ENCODE measurements at regions of chr15 and their contacts with region 1.

Region 1: GRCh38 chr15:70810916-70811578 is 42.9 kb downstream of the LARP6 start:
- DNase-seq: no peak
- H3K4me3 Mint-ChIP-seq: no peak overlapping the region
- H3K27ac Mint-ChIP-seq: no peak overlapping the region
- H3K4me1 Mint-ChIP-seq: no peaks in the 10 kb centered on the region
- H3K27me3 Mint-ChIP-seq: peaks cover 2% of the 10 kb centered on the region

Region 2: DNA sequence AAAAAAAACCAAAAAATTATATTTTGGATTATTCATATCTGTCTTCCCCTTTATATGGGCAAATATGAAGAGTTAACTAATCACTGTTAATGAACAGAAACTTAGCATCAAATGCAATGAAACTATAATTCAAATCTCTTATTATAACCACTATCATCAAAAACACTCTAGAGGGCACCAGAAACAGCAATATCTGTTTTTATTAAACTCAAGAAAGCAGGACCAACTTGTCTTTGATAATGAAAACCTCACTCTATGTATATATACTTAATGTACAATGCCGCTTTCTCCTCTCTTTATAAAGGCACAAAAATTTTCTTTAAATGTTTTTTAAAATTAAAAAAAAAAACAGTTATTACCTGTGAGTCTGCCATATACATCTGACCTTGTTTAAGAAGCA is 140.4 kb before region 1 on chr15:
- CTCF ChIA-PET with region 1: interaction called, 12 read pairs
- POLR2A ChIA-PET with region 1: no interaction called
- intact Hi-C with region 1: loop called (anchors 5 kb)
- DNase-seq: no peak
- H3K4me3 Mint-ChIP-seq: no peak overlapping the region
- H3K27ac Mint-ChIP-seq: no peak overlapping the region
- H3K4me1 Mint-ChIP-seq: peaks cover 16% of the 10 kb centered on the region
- H3K27me3 Mint-ChIP-seq: peaks cover 2% of the 10 kb centered on the region

Region 3: DNA sequence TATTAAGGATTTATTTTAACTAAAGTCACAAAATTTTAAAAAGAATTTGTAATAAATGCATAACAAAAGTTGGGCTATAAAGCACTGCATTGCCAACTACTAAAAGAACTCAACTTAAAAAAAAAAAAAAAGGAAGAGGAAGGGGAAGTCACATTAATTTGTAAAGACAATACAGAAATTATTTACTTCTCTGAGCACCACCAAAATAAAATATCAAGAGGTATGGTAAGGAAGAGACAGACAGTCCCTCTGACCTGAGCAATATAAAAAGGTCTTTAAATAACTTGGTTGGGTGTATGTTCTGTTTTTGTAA is 131.2 kb before region 1 on chr15:
- CTCF ChIA-PET with region 1: interaction called, 24 read pairs
- POLR2A ChIA-PET with region 1: no interaction called
- intact Hi-C with region 1: no loop called
- DNase-seq: no peak
- H3K4me3 Mint-ChIP-seq: no peak overlapping the region
- H3K27ac Mint-ChIP-seq: no peak overlapping the region
- H3K4me1 Mint-ChIP-seq: peaks cover 2% of the 10 kb centered on the region
- H3K27me3 Mint-ChIP-seq: peaks cover 5% of the 10 kb centered on the region

Region 4: DNA sequence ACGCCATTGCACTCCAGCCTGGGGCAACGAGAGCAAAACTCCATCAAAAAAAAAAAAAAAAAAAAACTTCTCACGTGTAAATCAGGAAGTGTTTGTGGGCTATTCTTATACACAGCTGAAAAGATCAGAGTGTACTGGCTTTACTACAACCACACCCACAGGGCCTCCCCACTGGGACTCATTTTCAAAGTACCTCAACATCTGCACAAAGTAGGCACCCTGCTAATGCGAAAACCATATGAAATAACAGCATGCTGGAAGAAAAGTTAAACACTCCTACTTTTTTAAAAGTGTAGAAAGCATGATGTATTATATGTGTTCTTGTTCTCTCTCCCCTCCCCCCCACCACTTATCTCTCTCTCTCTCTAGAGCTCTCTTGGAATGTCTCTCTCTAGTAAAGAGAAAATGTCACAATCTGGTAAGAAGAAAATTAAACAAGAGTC is 58.8 kb before region 1 on chr15:
- CTCF ChIA-PET with region 1: no interaction called
- POLR2A ChIA-PET with region 1: no interaction called
- intact Hi-C with region 1: no loop called
- DNase-seq: no peak
- H3K4me3 Mint-ChIP-seq: no peak overlapping the region
- H3K27ac Mint-ChIP-seq: no peak overlapping the region
- H3K4me1 Mint-ChIP-seq: peaks cover 3% of the 10 kb centered on the region
- H3K27me3 Mint-ChIP-seq: peaks cover 9% of the 10 kb centered on the region

Region 5: GRCh38 chr15:71114896-71115554 is 304.0 kb after region 1 on chr15 and contains the start of gene THSD4:
- CTCF ChIA-PET with region 1: no interaction called
- POLR2A ChIA-PET with region 1: no interaction called
- intact Hi-C with region 1: no loop called
- DNase-seq: peak; percentile 74
- H3K4me3 Mint-ChIP-seq: peak within 1 kb of the TSS; percentile 69
- H3K27ac Mint-ChIP-seq: no peak within 1 kb of the TSS
- H3K4me1 Mint-ChIP-seq: peaks cover 6% of the 10 kb centered on the region
- H3K27me3 Mint-ChIP-seq: peaks cover 50% of the 10 kb centered on the region
- total RNA-seq, gene THSD4: not detected

Region 6: GRCh38 chr15:71125831-71126453 is 314.9 kb after region 1 on chr15:
- CTCF ChIA-PET with region 1: no interaction called
- POLR2A ChIA-PET with region 1: no interaction called
- intact Hi-C with region 1: no loop called
- DNase-seq: no peak
- H3K4me3 Mint-ChIP-seq: no peak overlapping the region
- H3K27ac Mint-ChIP-seq: no peak overlapping the region
- H3K4me1 Mint-ChIP-seq: no peaks in the 10 kb centered on the region
- H3K27me3 Mint-ChIP-seq: peaks cover 13% of the 10 kb centered on the region

Measured in activated CD4-positive, alpha-beta memory T cell treated with anti-CD3 and anti-CD28 coated beads for 36 hours (primary cell).